Sciatic nerve (tissue), 2 donors: ENCODE measurements at regions of chr17 and their contacts with region 1.

Region 1: GRCh38 chr17:32783602-32784001 is 93.3 kb downstream of the MYO1D start:
- DNase-seq: no peak
- ATAC-seq: no peak

Region 2: GRCh38 chr17:32877164-32877764 is 93.7 kb after region 1 on chr17:
- intact Hi-C with region 1: loop called (anchors 10 kb)
- DNase-seq: peak; percentile 93
- ATAC-seq: peak; percentile 98